ENCODE measurements at regions of chr2 and their contacts with region 1.

Region 1: GRCh38 chr2:10057231-10058107 is 14.1 kb downstream of the KLF11 start:
- DNase-seq: no peak
- H3K4me3 ChIP-seq: peak overlapping the region; percentile 34
- CTCF ChIP-seq: no peak

Region 2: GRCh38 chr2:10043906-10044601 is 13.4 kb before region 1 on chr2:
- CTCF ChIA-PET with region 1: interaction called, 24 read pairs
- POLR2A ChIA-PET with region 1: no interaction called
- DNase-seq: no peak
- H3K4me3 ChIP-seq: peak overlapping the region; percentile 64
- CTCF ChIP-seq: no peak

Region 3: DNA sequence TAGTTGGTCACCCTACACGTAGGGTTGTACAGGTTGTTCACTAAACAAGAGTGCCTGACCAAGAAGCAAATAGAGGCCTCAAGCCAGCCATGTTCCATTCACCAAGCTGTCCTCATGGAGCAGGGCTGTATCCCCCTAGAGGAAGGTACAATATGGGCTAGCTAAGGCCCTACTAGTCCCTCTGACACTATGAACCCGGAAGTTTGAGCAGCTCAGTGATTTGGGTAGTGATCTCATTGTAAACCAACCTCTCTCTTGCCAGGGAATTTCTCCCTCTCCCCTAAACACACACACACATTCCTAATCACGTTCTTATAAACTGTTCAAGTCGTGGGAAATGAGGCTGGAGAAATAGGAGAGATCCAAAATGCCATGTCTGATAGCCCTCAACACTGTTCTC is 29.5 kb after region 1 on chr2:
- CTCF ChIA-PET with region 1: no interaction called
- POLR2A ChIA-PET with region 1: no interaction called
- DNase-seq: no peak
- H3K4me3 ChIP-seq: no peak overlapping the region
- CTCF ChIP-seq: no peak

Measured in AG04449 (cell line).